ENCODE measurements at regions of chr1 and their contacts with region 1.

Region 1: DNA sequence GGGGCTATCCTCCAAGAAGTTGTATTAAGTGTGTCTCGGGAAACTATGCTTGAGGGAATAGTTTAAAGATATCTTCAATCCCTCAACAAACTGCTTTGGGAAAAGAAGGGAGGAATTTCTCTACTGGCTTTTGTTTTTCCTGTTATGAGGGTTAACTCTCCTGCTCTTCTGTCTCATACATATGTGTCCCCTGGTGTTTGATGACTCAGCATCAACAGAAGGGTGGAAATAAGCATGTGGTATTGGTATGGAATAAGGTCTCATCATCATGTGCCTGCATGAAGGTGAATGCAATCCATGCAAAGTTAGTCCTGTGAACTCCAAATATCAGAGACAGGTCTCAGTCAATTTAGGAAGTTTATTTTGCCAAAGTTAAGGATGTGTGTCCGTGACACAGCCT is 27.2 kb upstream of the ADAR start:
- DNase-seq: no peak
- H3K4me3 ChIP-seq: no peak overlapping the region
- H3K27ac ChIP-seq: no peak overlapping the region
- H3K4me1 ChIP-seq: no peaks in the 10 kb centered on the region
- H3K27me3 ChIP-seq: no peaks in the 10 kb centered on the region
- CTCF ChIP-seq: no peak
- EP300 ChIP-seq: no peak
- POLR2A ChIP-seq: no peak

Region 2: DNA sequence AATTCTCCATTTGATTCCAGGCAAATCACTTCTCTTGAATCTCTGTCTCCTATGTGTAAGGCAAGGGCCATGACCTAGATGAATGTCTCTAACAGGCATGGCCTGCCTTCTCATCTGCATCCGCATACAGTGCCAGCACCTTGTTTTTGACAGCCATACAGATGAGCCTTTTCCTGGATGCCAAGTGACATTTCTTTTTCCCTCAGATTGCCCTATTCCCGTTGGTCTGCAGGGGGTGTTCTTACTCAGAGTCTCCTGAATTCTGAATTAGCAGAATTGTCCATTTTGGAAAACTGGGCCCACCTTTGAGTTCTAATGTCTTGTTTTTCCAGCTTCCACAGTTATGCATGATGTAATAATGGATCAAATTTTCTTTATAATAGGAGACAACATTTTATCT is 60.8 kb after region 1 on chr1:
- intact Hi-C with region 1: loop called in 1 of 4 experiments (anchors 10 kb)
- DNase-seq: no peak
- H3K4me3 ChIP-seq: no peak overlapping the region
- H3K27ac ChIP-seq: no peak overlapping the region
- H3K4me1 ChIP-seq: no peaks in the 10 kb centered on the region
- H3K27me3 ChIP-seq: no peaks in the 10 kb centered on the region
- CTCF ChIP-seq: peak in 1 of 3 donors; percentile 14
- EP300 ChIP-seq: no peak
- POLR2A ChIP-seq: no peak